ENCODE measurements at regions of chr7 and their contacts with region 1.

Region 1: GRCh38 chr7:78429878-78430277 is 631.3 kb downstream of the PHTF2 start:
- DNase-seq: no peak
- ATAC-seq: no peak
- H3K4me3 ChIP-seq: no peak overlapping the region
- H3K27ac ChIP-seq: no peak overlapping the region
- H3K4me1 ChIP-seq: no peaks in the 10 kb centered on the region
- H3K27me3 ChIP-seq: no peaks in the 10 kb centered on the region
- CTCF ChIP-seq: no peak

Region 2: DNA sequence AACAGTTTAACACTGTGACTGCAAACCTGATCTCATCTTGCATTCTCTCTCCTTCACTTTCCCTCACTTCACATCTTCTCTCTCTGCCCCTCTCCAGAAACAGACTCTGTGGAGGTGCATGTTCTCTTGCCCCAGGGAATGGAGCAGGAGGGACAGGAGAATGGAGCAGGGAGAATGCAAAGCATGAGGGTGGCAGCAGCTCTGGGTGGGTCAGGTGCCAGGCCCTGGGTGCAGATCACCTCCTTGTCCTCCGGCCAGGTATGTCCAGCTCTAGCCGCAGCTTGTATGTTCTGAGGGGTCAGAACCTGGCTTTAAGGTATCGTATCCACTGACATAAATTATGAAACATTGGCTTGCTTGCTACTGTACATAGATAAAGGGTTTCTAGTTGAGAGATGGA is 717.7 kb after region 1 on chr7:
- CTCF ChIA-PET with region 1: no interaction called
- POLR2A ChIA-PET with region 1: interaction called, 21 read pairs
- in situ Hi-C with region 1: no loop called
- intact Hi-C with region 1: no loop called
- DNase-seq: no peak
- ATAC-seq: no peak
- H3K4me3 ChIP-seq: no peak overlapping the region
- H3K27ac ChIP-seq: no peak overlapping the region
- H3K4me1 ChIP-seq: no peaks in the 10 kb centered on the region
- H3K27me3 ChIP-seq: no peaks in the 10 kb centered on the region
- CTCF ChIP-seq: no peak

Region 3: DNA sequence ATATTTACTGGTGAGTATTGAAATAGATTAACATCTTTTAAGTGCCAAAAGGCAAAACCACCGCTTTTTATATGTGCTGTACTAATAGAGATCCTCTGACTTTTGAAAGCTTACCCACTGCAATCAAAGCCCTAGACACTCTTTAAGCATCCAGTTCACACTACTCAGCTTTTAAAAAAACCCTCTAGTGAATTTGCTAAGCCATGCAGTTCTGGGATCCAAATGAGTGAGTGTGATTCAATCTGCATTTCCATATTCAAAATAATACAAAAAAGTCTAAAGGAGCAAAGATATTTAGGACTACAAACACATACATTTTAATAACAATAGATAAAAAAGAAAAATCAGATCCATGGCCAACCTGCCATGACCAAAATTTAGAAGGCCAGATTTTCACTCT is 735.3 kb after region 1 on chr7:
- CTCF ChIA-PET with region 1: interaction called, 14 read pairs
- POLR2A ChIA-PET with region 1: no interaction called
- in situ Hi-C with region 1: no loop called
- intact Hi-C with region 1: no loop called
- DNase-seq: no peak
- ATAC-seq: no peak
- H3K4me3 ChIP-seq: no peak overlapping the region
- H3K27ac ChIP-seq: no peak overlapping the region
- H3K4me1 ChIP-seq: no peaks in the 10 kb centered on the region; the same call in 1 of the 2 replicates
- H3K27me3 ChIP-seq: no peaks in the 10 kb centered on the region
- CTCF ChIP-seq: no peak